ENCODE measurements at regions of chr12 and their contacts with region 1.

Region 1: DNA sequence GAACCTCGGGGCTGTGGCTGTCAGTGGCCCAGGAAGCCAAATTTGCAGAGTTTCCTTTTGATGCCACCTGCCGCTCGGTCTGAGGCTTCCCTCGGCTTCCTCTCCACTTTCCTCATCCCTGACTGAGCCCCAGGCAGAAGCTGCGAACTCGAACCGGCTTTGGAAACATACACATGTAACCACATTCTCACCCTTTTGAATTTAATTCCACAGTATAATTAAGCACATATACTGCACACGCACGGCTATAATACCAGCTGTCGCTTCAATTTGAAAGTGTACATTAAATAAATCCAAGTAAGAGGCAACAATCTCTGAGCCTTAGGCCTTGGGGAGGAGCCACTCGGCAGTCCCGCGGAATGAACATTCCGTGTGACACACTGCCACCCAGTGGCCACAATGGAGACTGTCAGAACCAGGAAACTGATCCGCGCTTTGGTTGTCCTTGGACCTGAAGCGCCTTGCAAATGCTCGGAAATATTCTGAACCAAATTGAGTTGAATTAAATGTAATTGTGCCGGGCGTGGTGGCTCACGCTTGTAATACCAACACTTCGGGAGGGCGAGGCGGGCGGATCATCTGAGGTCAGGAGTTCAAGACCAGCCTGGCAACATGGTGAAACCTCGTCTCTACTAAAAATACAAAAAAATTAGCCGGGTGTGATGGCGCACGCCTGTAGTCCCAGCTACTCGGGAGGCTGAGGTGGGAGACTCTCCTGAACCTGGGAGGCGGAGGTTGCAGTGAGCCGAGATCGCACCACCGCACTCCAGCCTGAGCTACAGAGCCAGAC is 117.9 kb upstream of the TMPO start:
- DNase-seq: peak; percentile 53
- ATAC-seq: peak; percentile 93
- H3K4me3 ChIP-seq: peak overlapping the region; percentile 63; the same call in 1 of the 2 replicates
- H3K27ac ChIP-seq: no peak overlapping the region
- H3K4me1 ChIP-seq: peaks cover 23% of the 10 kb centered on the region
- H3K27me3 ChIP-seq: no peaks in the 10 kb centered on the region
- CTCF ChIP-seq: peak; percentile 76 to 90 (median 87)
- EP300 ChIP-seq: 0 out of 4 replicates have a peak, but pooled peaks of 1 of the 2 experiments have one; percentile 13
- POLR2A ChIP-seq: no peak
- RAD21 ChIP-seq: peak; percentile 84

Region 2: GRCh38 chr12:96587691-96588090 is 1809.8 kb before region 1 on chr12:
- CTCF ChIA-PET with region 1: interaction called, 3 read pairs
- POLR2A ChIA-PET with region 1: no interaction called
- RAD21 ChIA-PET with region 1: interaction called, 3 read pairs
- SMC1A ChIA-PET with region 1: no interaction called
- in situ Hi-C with region 1: loop called (anchors 10 kb)
- intact Hi-C with region 1: no loop called
- DNase-seq: no peak
- ATAC-seq: no peak
- H3K4me3 ChIP-seq: no peak overlapping the region
- H3K27ac ChIP-seq: no peak overlapping the region
- H3K4me1 ChIP-seq: no peaks in the 10 kb centered on the region
- H3K27me3 ChIP-seq: no peaks in the 10 kb centered on the region
- CTCF ChIP-seq: no peak
- EP300 ChIP-seq: no peak
- POLR2A ChIP-seq: no peak
- RAD21 ChIP-seq: no peak

Region 3: DNA sequence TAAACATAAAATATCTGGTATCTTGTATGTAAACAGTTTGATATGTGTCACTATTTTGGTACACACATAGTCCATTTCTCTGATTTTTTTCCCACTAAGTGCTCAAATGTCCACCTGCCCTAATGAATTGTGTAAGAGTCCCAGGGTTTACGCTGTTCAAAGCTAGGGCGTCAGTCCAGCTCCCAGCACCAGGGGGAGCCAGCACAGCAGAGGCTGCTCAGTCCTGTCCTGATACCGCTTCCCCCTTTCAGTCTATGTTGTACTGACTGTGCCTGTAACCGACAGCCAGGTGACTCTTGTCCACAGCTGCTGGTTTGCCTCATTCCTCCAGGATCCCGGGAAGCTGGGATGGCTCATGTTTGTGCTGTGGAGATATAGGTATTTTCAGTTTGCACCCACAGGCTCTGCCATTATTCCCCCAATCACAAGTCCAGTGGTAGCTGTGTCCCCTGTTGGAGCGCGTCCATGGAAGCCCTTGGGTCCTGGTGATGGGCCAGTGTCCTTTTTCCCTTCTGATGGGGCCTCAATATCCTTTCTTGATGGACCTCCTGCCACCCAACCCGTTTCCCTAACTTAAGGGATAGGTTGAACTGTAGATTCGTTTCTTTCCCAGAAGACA is 1248.5 kb before region 1 on chr12:
- CTCF ChIA-PET with region 1: interaction called, 13 read pairs
- POLR2A ChIA-PET with region 1: no interaction called
- RAD21 ChIA-PET with region 1: interaction called, 5 read pairs
- SMC1A ChIA-PET with region 1: no interaction called
- in situ Hi-C with region 1: loop called (anchors 10 kb)
- intact Hi-C with region 1: loop called (anchors 2 kb)
- DNase-seq: no peak
- ATAC-seq: peak; percentile 100
- H3K4me3 ChIP-seq: no peak overlapping the region
- H3K27ac ChIP-seq: no peak overlapping the region
- H3K4me1 ChIP-seq: no peaks in the 10 kb centered on the region
- H3K27me3 ChIP-seq: no peaks in the 10 kb centered on the region; a peak in 1 of 4 replicates
- CTCF ChIP-seq: peak; percentile 90 to 96 (median 90)
- EP300 ChIP-seq: no peak
- POLR2A ChIP-seq: no peak
- RAD21 ChIP-seq: peak; percentile 88

Region 4: GRCh38 chr12:97308576-97309198 is 1088.8 kb before region 1 on chr12:
- CTCF ChIA-PET with region 1: interaction called, 3 read pairs
- POLR2A ChIA-PET with region 1: no interaction called
- RAD21 ChIA-PET with region 1: no interaction called
- SMC1A ChIA-PET with region 1: no interaction called
- in situ Hi-C with region 1: loop called (anchors 25 kb)
- intact Hi-C with region 1: loop called (anchors 1 kb)
- DNase-seq: peak; percentile 15
- ATAC-seq: peak; percentile 45; the same call in 2 of the 3 replicates
- H3K4me3 ChIP-seq: no peak overlapping the region
- H3K27ac ChIP-seq: no peak overlapping the region
- H3K4me1 ChIP-seq: no peaks in the 10 kb centered on the region
- H3K27me3 ChIP-seq: no peaks in the 10 kb centered on the region
- CTCF ChIP-seq: peak; percentile 52 to 62 (median 57); a peak in 5 of 6 replicates
- EP300 ChIP-seq: no peak
- POLR2A ChIP-seq: no peak
- RAD21 ChIP-seq: peak; percentile 61

Region 5: GRCh38 chr12:98002712-98003493 is 394.6 kb before region 1 on chr12:
- CTCF ChIA-PET with region 1: interaction called, 3 read pairs
- POLR2A ChIA-PET with region 1: no interaction called
- RAD21 ChIA-PET with region 1: no interaction called
- SMC1A ChIA-PET with region 1: interaction called, 5 read pairs
- in situ Hi-C with region 1: no loop called
- intact Hi-C with region 1: loop called (anchors 5 kb)
- DNase-seq: no peak
- ATAC-seq: peak; percentile 91
- H3K4me3 ChIP-seq: no peak overlapping the region
- H3K27ac ChIP-seq: no peak overlapping the region
- H3K4me1 ChIP-seq: no peaks in the 10 kb centered on the region
- H3K27me3 ChIP-seq: no peaks in the 10 kb centered on the region; a peak in 1 of 4 replicates
- CTCF ChIP-seq: peak; percentile 52 to 60 (median 56); a peak in 5 of 6 replicates
- EP300 ChIP-seq: no peak
- POLR2A ChIP-seq: no peak
- RAD21 ChIP-seq: peak; percentile 58

Region 6: GRCh38 chr12:98308141-98308540 is 89.4 kb before region 1 on chr12:
- CTCF ChIA-PET with region 1: no interaction called
- POLR2A ChIA-PET with region 1: no interaction called
- RAD21 ChIA-PET with region 1: no interaction called
- SMC1A ChIA-PET with region 1: no interaction called
- in situ Hi-C with region 1: no loop called
- intact Hi-C with region 1: no loop called
- DNase-seq: no peak
- ATAC-seq: peak; percentile 25; the same call in 1 of the 3 replicates
- H3K4me3 ChIP-seq: no peak overlapping the region
- H3K27ac ChIP-seq: no peak overlapping the region
- H3K4me1 ChIP-seq: no peaks in the 10 kb centered on the region
- H3K27me3 ChIP-seq: no peaks in the 10 kb centered on the region
- CTCF ChIP-seq: no peak
- EP300 ChIP-seq: no peak
- POLR2A ChIP-seq: no peak
- RAD21 ChIP-seq: no peak

Region 7: GRCh38 chr12:98317939-98318899 is 79.3 kb before region 1 on chr12:
- CTCF ChIA-PET with region 1: no interaction called
- POLR2A ChIA-PET with region 1: no interaction called
- RAD21 ChIA-PET with region 1: no interaction called
- SMC1A ChIA-PET with region 1: no interaction called
- in situ Hi-C with region 1: no loop called
- intact Hi-C with region 1: no loop called
- DNase-seq: no peak
- ATAC-seq: peak; percentile 82
- H3K4me3 ChIP-seq: no peak overlapping the region
- H3K27ac ChIP-seq: no peak overlapping the region
- H3K4me1 ChIP-seq: no peaks in the 10 kb centered on the region
- H3K27me3 ChIP-seq: no peaks in the 10 kb centered on the region
- CTCF ChIP-seq: no peak
- EP300 ChIP-seq: no peak; a peak in 1 of 4 replicates
- POLR2A ChIP-seq: no peak
- RAD21 ChIP-seq: no peak

Region 8: GRCh38 chr12:99111600-99111999 is 714.1 kb after region 1 on chr12:
- CTCF ChIA-PET with region 1: no interaction called
- POLR2A ChIA-PET with region 1: no interaction called
- RAD21 ChIA-PET with region 1: no interaction called
- SMC1A ChIA-PET with region 1: no interaction called
- in situ Hi-C with region 1: no loop called
- intact Hi-C with region 1: no loop called
- DNase-seq: no peak
- ATAC-seq: no peak
- H3K4me3 ChIP-seq: no peak overlapping the region
- H3K27ac ChIP-seq: no peak overlapping the region
- H3K4me1 ChIP-seq: no peaks in the 10 kb centered on the region
- H3K27me3 ChIP-seq: no peaks in the 10 kb centered on the region; a peak in 1 of 4 replicates
- CTCF ChIP-seq: no peak
- EP300 ChIP-seq: no peak
- POLR2A ChIP-seq: no peak
- RAD21 ChIP-seq: no peak

Measured in GM12878 (cell line).